CD4-positive, alpha-beta memory T cell (primary cell): ENCODE measurements at regions of chr12 and their contacts with region 1.

Region 1: GRCh38 chr12:94101738-94102660 is 46.4 kb upstream of the PLXNC1 start:
- DNase-seq: peak; percentile 82 to 86 (median 83)
- H3K4me3 ChIP-seq: peak overlapping the region; percentile 54 to 82
- H3K4me3 Mint-ChIP-seq: peak overlapping the region; percentile 85 to 91 (median 88)
- H3K27ac ChIP-seq: peak overlapping the region; percentile 20
- H3K27ac Mint-ChIP-seq: peak overlapping the region; percentile 65 to 91 (median 72)
- H3K4me1 ChIP-seq: peaks cover 10% of the 10 kb centered on the region
- H3K4me1 Mint-ChIP-seq: peaks cover 5 to 21% (median 7%) of the 10 kb centered on the region in 4 donors
- H3K27me3 ChIP-seq: peaks cover 2% of the 10 kb centered on the region
- H3K27me3 Mint-ChIP-seq: peaks cover 10 to 11% of the 10 kb centered on the region in 2 donors

Region 2: GRCh38 chr12:93098077-93098476 is 1003.9 kb before region 1 on chr12:
- CTCF ChIA-PET with region 1: interaction called, 19 read pairs
- POLR2A ChIA-PET with region 1: no interaction called
- intact Hi-C with region 1: no loop called
- DNase-seq: peak; percentile 50 to 66 (median 54)
- H3K4me3 ChIP-seq: no peak overlapping the region
- H3K4me3 Mint-ChIP-seq: peak overlapping the region in 2 of 8 donors; percentile 12 to 46
- H3K27ac ChIP-seq: no peak overlapping the region
- H3K27ac Mint-ChIP-seq: peak overlapping the region in 1 of 7 donors; percentile 2
- H3K4me1 ChIP-seq: no peaks in the 10 kb centered on the region
- H3K4me1 Mint-ChIP-seq: peaks cover 6 to 10% (median 6%) of the 10 kb centered on the region in 4 donors
- H3K27me3 ChIP-seq: no peaks in the 10 kb centered on the region
- H3K27me3 Mint-ChIP-seq: no peaks in the 10 kb centered on the region

Region 3: GRCh38 chr12:93497456-93497855 is 604.5 kb before region 1 on chr12:
- CTCF ChIA-PET with region 1: interaction called, 480 read pairs
- POLR2A ChIA-PET with region 1: interaction called, 36 read pairs
- intact Hi-C with region 1: no loop called
- DNase-seq: no peak
- H3K4me3 ChIP-seq: no peak overlapping the region
- H3K4me3 Mint-ChIP-seq: no peak overlapping the region
- H3K27ac ChIP-seq: no peak overlapping the region
- H3K27ac Mint-ChIP-seq: peak overlapping the region in 2 of 7 donors; percentile 58 to 87
- H3K4me1 ChIP-seq: no peaks in the 10 kb centered on the region
- H3K4me1 Mint-ChIP-seq: peaks cover 0 to 2% (median under 1%) of the 10 kb centered on the region in 4 donors
- H3K27me3 ChIP-seq: no peaks in the 10 kb centered on the region
- H3K27me3 Mint-ChIP-seq: no peaks in the 10 kb centered on the region

Region 4: GRCh38 chr12:93536766-93537488 is 565.1 kb before region 1 on chr12:
- CTCF ChIA-PET with region 1: interaction called, 25 read pairs
- POLR2A ChIA-PET with region 1: no interaction called
- intact Hi-C with region 1: no loop called
- DNase-seq: no peak
- H3K4me3 ChIP-seq: no peak overlapping the region
- H3K4me3 Mint-ChIP-seq: no peak overlapping the region
- H3K27ac ChIP-seq: no peak overlapping the region
- H3K27ac Mint-ChIP-seq: no peak overlapping the region
- H3K4me1 ChIP-seq: peaks cover 6% of the 10 kb centered on the region
- H3K4me1 Mint-ChIP-seq: peaks cover 3 to 21% (median 13%) of the 10 kb centered on the region in 4 donors
- H3K27me3 ChIP-seq: no peaks in the 10 kb centered on the region
- H3K27me3 Mint-ChIP-seq: no peaks in the 10 kb centered on the region

Region 5: GRCh38 chr12:93742110-93742934 is 359.7 kb before region 1 on chr12:
- CTCF ChIA-PET with region 1: interaction called, 25 read pairs
- POLR2A ChIA-PET with region 1: interaction called, 3 read pairs
- intact Hi-C with region 1: no loop called
- DNase-seq: peak; percentile 40 to 58 (median 50)
- H3K4me3 ChIP-seq: peak overlapping the region; percentile 60 to 72
- H3K4me3 Mint-ChIP-seq: peak overlapping the region; percentile 91 to 98 (median 94)
- H3K27ac ChIP-seq: peak overlapping the region; percentile 63
- H3K27ac Mint-ChIP-seq: peak overlapping the region; percentile 87 to 95 (median 94)
- H3K4me1 ChIP-seq: peaks cover 25% of the 10 kb centered on the region
- H3K4me1 Mint-ChIP-seq: peaks cover 9 to 40% (median 21%) of the 10 kb centered on the region in 4 donors
- H3K27me3 ChIP-seq: no peaks in the 10 kb centered on the region
- H3K27me3 Mint-ChIP-seq: no peaks in the 10 kb centered on the region

Region 6: GRCh38 chr12:94012590-94012989 is 89.4 kb before region 1 on chr12:
- CTCF ChIA-PET with region 1: interaction called, 28 read pairs
- POLR2A ChIA-PET with region 1: interaction called, 6 read pairs
- intact Hi-C with region 1: no loop called
- DNase-seq: no peak
- H3K4me3 ChIP-seq: no peak overlapping the region
- H3K4me3 Mint-ChIP-seq: no peak overlapping the region
- H3K27ac ChIP-seq: no peak overlapping the region
- H3K27ac Mint-ChIP-seq: no peak overlapping the region
- H3K4me1 ChIP-seq: peaks cover 8% of the 10 kb centered on the region
- H3K4me1 Mint-ChIP-seq: peaks cover 2 to 13% (median 10%) of the 10 kb centered on the region in 4 donors
- H3K27me3 ChIP-seq: no peaks in the 10 kb centered on the region
- H3K27me3 Mint-ChIP-seq: peaks cover 0 to 2% of the 10 kb centered on the region in 2 donors